Mammary epithelial cell (primary cell): ENCODE measurements at regions of chr5 and their contacts with region 1.

Region 1: GRCh38 chr5:71757590-71758543 is 38.8 kb downstream of the CARTPT start:
- DNase-seq: peak; percentile 54
- H3K4me3 ChIP-seq: no peak overlapping the region
- H3K27ac ChIP-seq: no peak overlapping the region
- H3K4me1 ChIP-seq: no peaks in the 10 kb centered on the region
- H3K27me3 ChIP-seq: no peaks in the 10 kb centered on the region
- CTCF ChIP-seq: peak; percentile 81 to 92

Region 2: GRCh38 chr5:71455427-71456361 is 302.2 kb before region 1 on chr5 and contains the start of gene BDP1:
- CTCF ChIA-PET with region 1: no interaction called
- dilution Hi-C with region 1: no loop called
- in situ Hi-C with region 1: no loop called
- intact Hi-C with region 1: loop called (anchors 1 kb)
- DNase-seq: peak; percentile 93
- H3K4me3 ChIP-seq: peak within 1 kb of the TSS; percentile 75 to 88 (median 83)
- H3K27ac ChIP-seq: peak within 1 kb of the TSS; percentile 89
- H3K4me1 ChIP-seq: peaks cover 2% of the 10 kb centered on the region
- H3K27me3 ChIP-seq: no peaks in the 10 kb centered on the region
- CTCF ChIP-seq: peak; percentile 11 to 26
- total RNA-seq, gene BDP1: 18.7 to 26.4 TPM

Region 3: GRCh38 chr5:71475788-71476384 is 282.0 kb before region 1 on chr5:
- CTCF ChIA-PET with region 1: no interaction called
- dilution Hi-C with region 1: no loop called
- in situ Hi-C with region 1: no loop called
- intact Hi-C with region 1: loop called (anchors 1 kb)
- DNase-seq: peak; percentile 30
- H3K4me3 ChIP-seq: no peak overlapping the region
- H3K27ac ChIP-seq: no peak overlapping the region
- H3K4me1 ChIP-seq: peaks cover 6% of the 10 kb centered on the region
- H3K27me3 ChIP-seq: no peaks in the 10 kb centered on the region
- CTCF ChIP-seq: peak; percentile 72 to 75

Region 4: DNA sequence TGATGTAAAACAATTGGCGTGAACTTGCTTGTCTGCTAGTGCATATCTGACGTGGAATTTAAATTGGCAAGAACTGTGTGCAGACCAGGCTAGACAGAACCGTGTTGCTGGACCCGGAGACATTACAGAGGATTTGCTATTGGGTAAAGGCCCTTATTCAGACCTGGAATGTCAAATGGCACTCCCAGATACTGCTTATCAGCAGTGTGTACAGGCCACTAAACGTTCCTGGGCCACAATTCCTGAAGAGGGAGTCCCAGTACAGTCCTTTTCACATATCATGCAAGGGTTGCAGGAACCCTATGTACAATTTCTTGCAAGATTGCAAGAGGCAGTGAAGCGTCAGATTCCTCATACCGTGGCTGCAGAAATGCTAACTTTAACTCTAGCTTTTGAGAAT is 184.3 kb before region 1 on chr5:
- CTCF ChIA-PET with region 1: no interaction called
- dilution Hi-C with region 1: no loop called
- in situ Hi-C with region 1: no loop called
- intact Hi-C with region 1: loop called (anchors 5 kb)
- DNase-seq: no peak
- H3K4me3 ChIP-seq: no peak overlapping the region
- H3K27ac ChIP-seq: no peak overlapping the region
- H3K4me1 ChIP-seq: no peaks in the 10 kb centered on the region
- H3K27me3 ChIP-seq: no peaks in the 10 kb centered on the region
- CTCF ChIP-seq: no peak

Region 5: GRCh38 chr5:71658916-71659662 is 98.8 kb before region 1 on chr5:
- CTCF ChIA-PET with region 1: no interaction called
- dilution Hi-C with region 1: no loop called
- in situ Hi-C with region 1: no loop called
- intact Hi-C with region 1: loop called (anchors 10 kb)
- DNase-seq: no peak
- H3K4me3 ChIP-seq: no peak overlapping the region
- H3K27ac ChIP-seq: no peak overlapping the region
- H3K4me1 ChIP-seq: no peaks in the 10 kb centered on the region
- H3K27me3 ChIP-seq: no peaks in the 10 kb centered on the region
- CTCF ChIP-seq: peak in 1 of 2 donors; percentile 12

Region 6: DNA sequence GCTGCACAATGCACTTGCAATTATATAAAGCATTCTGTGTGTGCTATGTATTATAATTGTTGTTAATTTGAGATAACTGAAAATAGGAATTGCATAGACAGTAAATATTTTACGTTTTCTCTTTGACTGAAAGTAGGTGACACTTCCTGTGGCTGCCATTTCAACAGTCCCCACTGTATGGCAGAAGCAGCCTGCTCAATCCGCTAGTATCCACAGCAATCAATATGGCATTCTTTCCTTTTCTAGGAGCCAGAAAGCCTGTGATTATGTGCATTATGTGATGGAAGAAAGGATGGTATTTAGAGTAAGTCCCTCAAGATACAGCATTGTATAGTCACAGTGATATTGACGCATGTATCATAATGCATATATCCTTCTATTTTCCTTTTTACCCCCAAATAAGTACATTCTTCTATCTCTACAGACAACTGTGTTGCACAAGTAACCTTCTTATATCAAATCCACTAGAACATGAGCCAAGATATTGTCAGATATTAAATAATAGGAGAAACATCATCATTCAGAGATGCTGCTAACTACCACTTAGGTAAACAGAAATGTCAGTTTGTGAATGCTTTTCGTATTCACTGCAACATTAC is 20.9 kb after region 1 on chr5:
- CTCF ChIA-PET with region 1: no interaction called
- dilution Hi-C with region 1: no loop called
- in situ Hi-C with region 1: no loop called
- intact Hi-C with region 1: no loop called
- DNase-seq: peak; percentile 18
- H3K4me3 ChIP-seq: no peak overlapping the region
- H3K27ac ChIP-seq: no peak overlapping the region
- H3K4me1 ChIP-seq: peaks cover 9% of the 10 kb centered on the region
- H3K27me3 ChIP-seq: peaks cover 3% of the 10 kb centered on the region
- CTCF ChIP-seq: peak; percentile 88 to 89

Region 7: DNA sequence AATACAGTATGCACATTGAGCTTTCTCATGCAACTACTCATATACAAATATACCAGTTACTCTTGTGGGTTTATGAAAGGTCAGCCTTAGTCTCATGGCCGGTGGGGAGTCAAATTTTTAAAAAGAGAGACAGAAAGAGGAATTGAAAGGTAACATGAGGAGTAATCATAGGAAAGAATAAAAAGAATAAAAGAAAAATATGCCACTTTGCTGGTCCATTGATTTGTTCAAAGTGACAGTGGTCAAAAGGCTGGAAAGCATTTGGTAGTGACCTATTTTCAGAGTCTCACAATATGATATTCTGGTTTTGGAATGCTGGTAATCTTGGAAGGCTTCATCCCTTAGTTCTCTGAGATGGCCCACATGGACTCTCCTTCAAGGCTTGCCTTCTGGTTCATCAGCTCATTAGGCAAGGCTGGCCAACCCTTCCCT is 682.4 kb after region 1 on chr5:
- CTCF ChIA-PET with region 1: no interaction called
- dilution Hi-C with region 1: no loop called
- in situ Hi-C with region 1: no loop called
- intact Hi-C with region 1: no loop called
- DNase-seq: no peak
- H3K4me3 ChIP-seq: no peak overlapping the region
- H3K27ac ChIP-seq: no peak overlapping the region
- H3K4me1 ChIP-seq: peaks cover 25% of the 10 kb centered on the region
- H3K27me3 ChIP-seq: no peaks in the 10 kb centered on the region
- CTCF ChIP-seq: no peak